Dorsolateral prefrontal cortex (tissue), 120 donors: ENCODE measurements at regions of chr16 and their contacts with region 1.

Region 1: GRCh38 chr16:75965504-75966374 is 239.4 kb upstream of the CPHXL start:
- DNase-seq: peak in 1 of 10 donors; percentile 4
- H3K4me3 ChIP-seq: no peak overlapping the region
- H3K27ac ChIP-seq: peak overlapping the region in 58 of 59 donors; percentile 27 to 93 (median 86)
- H3K27me3 ChIP-seq: no peaks in the 10 kb centered on the region
- CTCF ChIP-seq: peak in 1 of 56 donors; percentile 16

Region 2: GRCh38 chr16:76071690-76072089 is 106.0 kb after region 1 on chr16:
- intact Hi-C with region 1: loop called in 1 of 2 experiments (anchors 10 kb)
- DNase-seq: no peak
- H3K4me3 ChIP-seq: no peak overlapping the region
- H3K27ac ChIP-seq: no peak overlapping the region
- H3K27me3 ChIP-seq: no peaks in the 10 kb centered on the region
- CTCF ChIP-seq: no peak